Dendritic cell treated with granulocyte-macrophage colony-stimulating factor and Interleukin-4, amounts not matched to agents 40 ng/mL and 50 ng/mL, for 4 days (primary cell): ENCODE measurements at regions of chr5 and their contacts with region 1.

Region 1: GRCh38 chr5:172188033-172188892 is at the start of gene STK10:
- H3K4me3 Mint-ChIP-seq: peak within 1 kb of the TSS; percentile 100
- H3K27ac Mint-ChIP-seq: peak within 1 kb of the TSS; percentile 97
- H3K4me1 Mint-ChIP-seq: peaks cover 36% of the 10 kb centered on the region
- H3K27me3 Mint-ChIP-seq: peaks cover 5% of the 10 kb centered on the region

Region 2: GRCh38 chr5:171901764-171902163 is 286.5 kb before region 1 on chr5:
- intact Hi-C with region 1: no loop called
- H3K4me3 Mint-ChIP-seq: no peak overlapping the region
- H3K27ac Mint-ChIP-seq: no peak overlapping the region
- H3K4me1 Mint-ChIP-seq: peaks cover 21% of the 10 kb centered on the region
- H3K27me3 Mint-ChIP-seq: no peaks in the 10 kb centered on the region

Region 3: GRCh38 chr5:172006321-172007174 is 181.7 kb before region 1 on chr5 and contains the start of gene FBXW11:
- intact Hi-C with region 1: loop called (anchors 2 kb)
- H3K4me3 Mint-ChIP-seq: peak within 1 kb of the TSS; percentile 85
- H3K27ac Mint-ChIP-seq: peak within 1 kb of the TSS; percentile 93
- H3K4me1 Mint-ChIP-seq: peaks cover 51% of the 10 kb centered on the region
- H3K27me3 Mint-ChIP-seq: no peaks in the 10 kb centered on the region

Region 4: GRCh38 chr5:172106511-172107356 is 81.5 kb before region 1 on chr5:
- intact Hi-C with region 1: loop called (anchors 1 kb)
- H3K4me3 Mint-ChIP-seq: no peak overlapping the region
- H3K27ac Mint-ChIP-seq: no peak overlapping the region
- H3K4me1 Mint-ChIP-seq: peaks cover 72% of the 10 kb centered on the region
- H3K27me3 Mint-ChIP-seq: no peaks in the 10 kb centered on the region

Region 5: DNA sequence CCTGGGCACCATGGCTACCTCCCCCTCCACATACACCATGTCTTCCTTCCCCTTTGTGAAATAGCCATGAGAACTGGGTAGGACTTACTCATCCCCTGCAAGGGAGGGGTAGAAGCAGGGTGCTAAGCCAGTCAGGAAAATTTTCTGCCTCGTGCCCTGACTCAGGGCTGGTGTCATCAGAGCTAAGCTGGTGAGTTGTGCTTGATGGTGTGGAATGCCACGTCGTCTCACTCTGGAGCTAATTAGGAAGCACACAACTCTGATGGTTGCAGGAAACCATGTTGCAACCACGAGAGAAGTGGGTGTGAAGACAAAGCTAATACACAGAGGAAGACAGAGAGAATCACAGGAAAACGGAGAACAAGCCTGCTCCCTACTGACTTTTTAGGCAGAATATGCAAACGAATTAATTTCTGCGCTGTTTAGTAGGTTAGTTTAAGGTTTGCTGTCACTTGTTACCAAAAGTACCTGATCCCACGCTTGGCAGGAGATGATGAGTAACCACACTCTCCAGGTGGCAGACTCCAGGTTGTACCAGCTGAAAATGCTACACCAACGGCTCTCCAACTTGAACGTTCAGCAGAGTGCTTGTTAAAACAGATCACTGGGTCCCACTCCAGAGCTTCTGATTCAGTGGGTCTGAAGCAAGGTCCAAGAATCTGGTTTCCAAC is 54.8 kb before region 1 on chr5:
- intact Hi-C with region 1: loop called (anchors 1 kb)
- H3K4me3 Mint-ChIP-seq: no peak overlapping the region
- H3K27ac Mint-ChIP-seq: peak overlapping the region; percentile 98
- H3K4me1 Mint-ChIP-seq: peaks cover 70% of the 10 kb centered on the region
- H3K27me3 Mint-ChIP-seq: no peaks in the 10 kb centered on the region

Region 6: DNA sequence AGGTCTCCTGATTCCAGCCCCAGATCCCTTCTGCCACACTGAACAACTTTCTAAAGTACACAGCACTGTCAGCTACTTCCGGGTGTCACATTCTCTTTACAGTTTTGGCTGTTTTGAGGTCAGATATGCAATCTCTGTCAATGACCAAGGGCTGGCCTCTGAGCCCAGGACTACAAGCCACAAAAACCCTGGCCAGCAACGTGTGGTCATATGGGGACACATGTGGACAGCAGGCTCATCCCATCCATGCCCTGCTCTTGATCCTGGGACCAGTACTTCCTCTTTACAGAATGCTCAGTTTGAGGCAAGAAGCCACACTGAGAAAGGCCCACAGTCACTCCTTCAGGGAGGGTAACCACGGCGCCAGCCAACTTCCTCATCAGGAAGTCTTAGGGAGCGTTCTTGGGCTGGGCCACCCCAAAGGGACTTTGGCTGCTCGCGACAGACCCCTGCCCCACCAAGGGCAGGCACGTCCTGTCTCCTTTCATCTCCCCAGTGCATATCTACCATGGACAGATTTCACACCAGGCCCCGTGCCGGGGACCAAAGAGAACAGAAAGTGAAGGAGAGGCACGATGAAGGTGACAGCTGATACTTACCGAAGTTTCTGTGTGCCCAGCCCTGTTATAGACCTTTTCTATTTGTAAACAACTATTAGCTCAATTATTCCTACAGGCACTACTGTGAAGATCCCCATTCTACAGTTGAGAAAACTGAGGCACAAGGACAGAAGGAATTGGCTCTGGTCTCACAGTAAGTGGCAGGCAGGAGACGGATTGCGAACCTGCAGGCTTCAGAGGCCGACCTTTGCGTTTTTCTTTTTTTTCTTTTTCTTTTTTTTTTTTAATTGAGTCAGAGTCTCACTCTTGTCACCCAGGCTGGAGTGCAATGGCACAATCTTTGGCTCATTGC is 37.5 kb before region 1 on chr5:
- intact Hi-C with region 1: loop called (anchors 1 kb)
- H3K4me3 Mint-ChIP-seq: peak overlapping the region; percentile 58
- H3K27ac Mint-ChIP-seq: peak overlapping the region; percentile 90
- H3K4me1 Mint-ChIP-seq: peaks cover 81% of the 10 kb centered on the region
- H3K27me3 Mint-ChIP-seq: no peaks in the 10 kb centered on the region

Region 7: GRCh38 chr5:172173831-172174153 is 14.5 kb before region 1 on chr5:
- intact Hi-C with region 1: loop called (anchors 1 kb)
- H3K4me3 Mint-ChIP-seq: peak overlapping the region; percentile 77
- H3K27ac Mint-ChIP-seq: peak overlapping the region; percentile 74
- H3K4me1 Mint-ChIP-seq: peaks cover 96% of the 10 kb centered on the region
- H3K27me3 Mint-ChIP-seq: no peaks in the 10 kb centered on the region

Region 8: DNA sequence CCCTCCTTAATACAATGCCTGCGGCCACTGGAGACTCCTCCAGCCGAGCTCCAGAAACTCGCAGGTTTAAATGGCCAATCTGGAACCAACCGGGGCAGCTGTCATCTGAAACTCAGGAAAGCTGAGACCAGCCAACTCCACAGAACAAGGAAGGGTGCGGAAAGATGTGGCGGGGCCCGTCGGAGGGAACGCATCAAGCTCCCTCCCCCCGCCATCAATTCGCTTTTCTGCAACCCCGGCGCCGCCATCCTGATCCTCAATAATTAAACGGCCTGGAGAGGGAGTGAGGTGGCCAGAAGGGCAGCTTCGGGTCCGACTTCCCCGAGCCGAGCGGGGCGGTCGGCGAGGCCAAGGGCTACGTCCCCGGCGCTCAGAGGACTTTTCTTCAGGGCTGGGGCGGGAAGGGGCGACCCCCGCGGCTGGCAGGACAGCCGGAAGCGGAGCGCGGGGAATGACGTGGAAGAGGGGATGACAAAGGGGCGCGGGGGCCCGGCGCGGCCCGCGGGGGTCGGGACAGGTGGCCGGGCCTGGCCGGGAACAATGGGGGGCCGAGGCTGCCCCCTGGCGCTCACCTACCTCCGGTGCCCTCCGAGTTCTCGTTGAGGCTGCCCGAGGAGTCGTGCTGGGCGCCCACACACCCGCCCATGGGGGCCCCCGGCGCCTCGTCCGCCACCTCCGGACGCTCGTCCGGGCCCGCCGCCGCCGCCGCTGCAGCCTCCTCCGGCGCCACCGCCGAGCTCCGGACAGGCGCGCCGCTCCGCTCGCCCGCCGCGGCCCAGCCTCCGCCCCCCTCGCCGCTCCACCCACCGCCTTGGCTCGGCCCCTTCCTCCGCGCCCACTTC is 95.0 kb after region 1 on chr5 and contains the start of gene UBTD2:
- intact Hi-C with region 1: loop called (anchors 5 kb)
- H3K4me3 Mint-ChIP-seq: peak within 1 kb of the TSS; percentile 93
- H3K27ac Mint-ChIP-seq: peak within 1 kb of the TSS; percentile 94
- H3K4me1 Mint-ChIP-seq: peaks cover 35% of the 10 kb centered on the region
- H3K27me3 Mint-ChIP-seq: peaks cover 7% of the 10 kb centered on the region

Region 9: DNA sequence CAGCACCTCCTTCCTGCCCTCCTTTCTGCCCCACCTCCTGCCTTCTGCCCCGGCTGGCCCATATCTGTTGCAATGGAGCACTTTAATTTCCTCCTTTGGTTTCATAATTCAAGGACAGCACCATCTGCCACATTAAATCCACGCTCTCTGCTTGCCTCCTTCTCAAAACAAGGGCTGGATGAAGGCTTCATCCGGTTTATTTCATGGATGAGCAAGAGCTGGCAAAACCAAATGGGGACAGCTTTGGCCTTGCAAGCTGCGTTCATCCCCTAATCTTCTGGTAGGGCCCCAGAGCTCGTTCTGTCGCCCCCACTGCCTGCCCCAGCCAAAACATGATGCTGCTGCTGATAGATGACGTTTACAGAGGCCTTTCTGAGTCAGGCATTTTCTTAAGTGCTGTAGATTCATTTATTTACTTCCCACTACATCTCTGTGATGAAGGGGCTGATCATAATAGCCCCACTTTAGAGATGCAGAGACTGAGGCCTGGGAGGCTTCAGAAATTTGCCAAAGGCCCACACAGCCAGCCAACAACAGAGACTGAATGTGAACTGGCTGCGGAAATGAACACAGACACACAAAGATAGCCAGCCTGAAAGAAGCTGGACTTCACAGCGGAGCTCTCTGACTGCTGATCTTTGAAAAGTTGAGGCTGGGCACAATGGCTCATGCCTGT is 1584.3 kb after region 1 on chr5:
- intact Hi-C with region 1: no loop called
- H3K4me3 Mint-ChIP-seq: no peak overlapping the region
- H3K27ac Mint-ChIP-seq: peak overlapping the region; percentile 36
- H3K4me1 Mint-ChIP-seq: peaks cover 41% of the 10 kb centered on the region
- H3K27me3 Mint-ChIP-seq: no peaks in the 10 kb centered on the region